AG04450 (cell line): ENCODE measurements at regions of chr9 and their contacts with region 1.

Region 1: DNA sequence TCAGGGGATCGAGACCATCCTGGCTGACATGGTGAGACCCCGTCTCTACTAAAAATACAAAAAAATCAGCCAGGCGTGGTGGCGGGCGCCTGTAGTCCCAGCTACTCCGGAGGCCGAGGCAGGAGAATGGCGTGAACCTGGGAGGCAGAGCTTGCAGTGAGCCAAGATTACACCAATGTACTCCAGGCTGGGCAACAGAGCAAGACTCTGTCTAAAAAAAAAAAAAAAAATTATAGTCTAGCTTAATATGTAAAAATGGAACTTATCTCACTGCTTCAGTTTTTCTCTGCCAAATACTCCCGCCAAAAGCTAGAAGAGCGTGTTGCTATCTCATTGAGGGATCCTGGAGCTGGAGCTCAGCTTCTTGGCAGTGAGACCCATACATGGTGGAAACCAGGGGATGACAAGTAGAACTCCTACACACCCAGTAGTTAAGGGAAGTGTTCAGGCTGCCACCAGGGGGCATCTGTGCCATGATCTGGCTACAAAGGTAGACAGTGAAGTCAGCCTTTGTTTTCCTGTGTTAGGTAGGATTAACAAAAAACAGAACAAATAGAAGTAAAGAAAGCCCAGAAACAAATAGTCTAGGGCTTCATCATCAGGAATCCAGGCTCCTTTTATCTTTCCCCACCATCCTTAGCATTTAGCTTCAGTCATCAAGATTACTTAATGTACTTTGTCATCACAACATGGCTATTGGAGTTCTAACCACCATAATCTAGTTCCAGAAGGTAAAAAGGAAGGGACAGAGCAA is 33.6 kb upstream of the GLIPR2 start:
- DNase-seq: no peak
- H3K4me3 ChIP-seq: no peak overlapping the region
- H3K27ac ChIP-seq: peak overlapping the region; percentile 86
- H3K27me3 ChIP-seq: no peaks in the 10 kb centered on the region
- CTCF ChIP-seq: peak; percentile 65

Region 2: DNA sequence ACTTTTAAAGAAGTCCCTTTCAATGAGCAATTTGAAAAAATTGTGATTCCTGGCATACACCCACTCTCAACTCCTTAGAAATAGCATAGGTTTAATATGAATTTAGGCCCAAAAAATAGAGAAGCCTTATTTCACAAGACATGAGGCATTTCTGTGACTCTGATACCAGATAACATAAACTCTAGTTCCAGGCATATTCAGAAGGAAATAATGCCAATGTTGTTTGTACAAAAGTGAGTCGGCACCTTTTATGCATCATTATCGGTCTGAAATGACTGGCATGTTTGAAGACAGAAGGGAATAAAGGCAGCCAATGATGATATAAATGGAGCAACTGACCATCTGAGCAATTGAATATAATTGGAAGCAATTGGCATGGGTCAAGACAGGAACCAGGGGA is 85.6 kb before region 1 on chr9:
- CTCF ChIA-PET with region 1: no interaction called
- POLR2A ChIA-PET with region 1: no interaction called
- DNase-seq: no peak
- H3K4me3 ChIP-seq: no peak overlapping the region
- H3K27ac ChIP-seq: peak overlapping the region; percentile 55
- H3K27me3 ChIP-seq: no peaks in the 10 kb centered on the region
- CTCF ChIP-seq: no peak

Region 3: DNA sequence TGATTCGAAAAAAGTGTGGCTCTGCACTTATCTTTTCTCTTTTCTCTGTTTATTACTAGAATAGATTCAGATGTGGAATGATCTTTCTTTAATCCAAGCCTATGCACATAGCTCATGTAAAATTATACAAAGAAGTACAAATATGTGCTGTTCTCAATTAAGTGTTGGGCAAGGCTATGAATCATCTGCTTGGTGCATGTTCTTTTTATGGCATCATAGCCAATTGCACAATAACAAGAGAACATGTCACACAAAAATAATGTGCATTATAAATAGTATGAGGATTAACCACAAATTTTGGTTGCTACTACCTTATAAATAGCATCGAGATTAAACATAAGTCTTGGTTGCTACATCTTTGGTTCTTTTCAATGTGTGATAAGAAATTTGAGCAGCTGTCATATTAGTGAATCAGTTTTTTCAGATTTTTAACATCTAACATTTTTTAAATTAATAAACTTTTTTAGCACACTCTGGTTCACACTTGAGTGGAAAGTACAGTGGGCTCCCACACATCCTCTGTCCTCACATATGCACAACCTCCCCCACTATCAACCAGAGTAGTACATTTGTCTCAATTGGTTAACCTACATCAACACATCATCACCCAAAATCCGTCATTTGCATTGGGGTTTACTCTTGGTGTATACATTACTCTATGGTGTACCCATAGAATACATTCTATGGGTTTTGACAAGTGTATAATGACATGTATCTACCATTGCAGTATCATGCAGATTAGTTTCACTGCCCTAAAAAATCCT is 73.0 kb before region 1 on chr9:
- CTCF ChIA-PET with region 1: interaction called, 7 read pairs
- POLR2A ChIA-PET with region 1: interaction called, 18 read pairs
- DNase-seq: peak; percentile 94
- H3K4me3 ChIP-seq: no peak overlapping the region
- H3K27ac ChIP-seq: peak overlapping the region; percentile 66
- H3K27me3 ChIP-seq: no peaks in the 10 kb centered on the region
- CTCF ChIP-seq: no peak

Region 4: GRCh38 chr9:36092509-36093215 is 10.3 kb before region 1 on chr9:
- CTCF ChIA-PET with region 1: interaction called, 6 read pairs
- POLR2A ChIA-PET with region 1: interaction called, 14 read pairs
- DNase-seq: no peak
- H3K4me3 ChIP-seq: no peak overlapping the region
- H3K27ac ChIP-seq: no peak overlapping the region
- H3K27me3 ChIP-seq: no peaks in the 10 kb centered on the region
- CTCF ChIP-seq: no peak